K562 (cell line): ENCODE measurements at regions of chr12 and their contacts with region 1.

Region 1: DNA sequence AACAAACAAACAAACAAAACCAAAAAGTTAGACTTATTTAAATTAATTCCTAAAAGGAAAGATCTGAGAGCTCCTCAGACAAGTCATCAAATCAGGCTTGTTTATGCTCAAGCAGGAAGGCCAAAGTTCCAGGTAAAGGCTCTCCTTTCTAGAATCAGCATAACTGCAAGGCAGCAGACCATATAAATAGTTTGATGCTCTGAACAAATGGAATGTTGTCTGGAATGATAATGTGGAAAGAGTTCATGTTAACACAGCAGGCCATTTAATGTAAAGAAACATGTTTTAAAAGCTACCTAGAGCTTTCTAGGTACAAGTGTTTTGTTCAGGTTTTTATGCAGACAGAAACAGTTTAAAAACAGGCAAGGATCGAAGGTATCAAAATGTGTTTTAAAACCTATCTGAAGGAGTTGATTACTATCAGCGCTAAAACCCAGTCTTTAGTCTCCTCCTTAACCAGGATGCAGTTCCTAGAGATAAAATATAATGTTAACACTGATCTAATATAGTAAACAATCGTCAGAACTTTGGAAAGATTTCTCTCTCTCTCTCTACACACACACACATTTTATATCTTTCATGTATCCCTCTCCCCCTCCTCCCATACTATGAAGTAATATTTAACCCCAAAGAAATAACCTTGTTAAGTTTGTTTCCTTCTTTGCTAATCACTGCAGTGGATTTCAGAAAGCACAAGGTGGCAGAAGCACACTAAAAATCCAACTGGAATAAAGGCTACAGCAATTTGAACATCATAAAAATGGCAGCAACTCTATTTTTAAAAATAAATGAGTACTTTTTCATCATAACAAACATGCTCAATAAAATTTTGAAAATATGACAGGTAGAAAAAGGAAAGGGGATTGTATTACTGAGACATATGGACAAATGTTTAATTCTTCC is 135.5 kb downstream of the PAWR start:
- DNase-seq: peak in 1 of 4 experiments; percentile 1
- ATAC-seq: no peak
- H3K4me3 ChIP-seq: no peak overlapping the region
- H3K27ac ChIP-seq: no peak overlapping the region
- H3K4me1 ChIP-seq: no peaks in the 10 kb centered on the region
- H3K27me3 ChIP-seq: no peaks in the 10 kb centered on the region
- CTCF ChIP-seq: peak; percentile 10 to 40 (median 19); a peak in 3 of 6 replicates
- EP300 ChIP-seq: no peak
- POLR2A ChIP-seq: no peak
- RAD21 ChIP-seq: peak; percentile 49 to 56

Region 2: GRCh38 chr12:79487386-79488110 is 67.7 kb before region 1 on chr12:
- CTCF ChIA-PET with region 1: no interaction called
- POLR2A ChIA-PET with region 1: no interaction called
- in situ Hi-C with region 1: no loop called
- intact Hi-C with region 1: no loop called
- DNase-seq: no peak
- ATAC-seq: no peak
- H3K4me3 ChIP-seq: no peak overlapping the region
- H3K27ac ChIP-seq: no peak overlapping the region
- H3K4me1 ChIP-seq: no peaks in the 10 kb centered on the region
- H3K27me3 ChIP-seq: no peaks in the 10 kb centered on the region
- CTCF ChIP-seq: no peak
- EP300 ChIP-seq: no peak
- POLR2A ChIP-seq: no peak
- RAD21 ChIP-seq: no peak

Region 3: DNA sequence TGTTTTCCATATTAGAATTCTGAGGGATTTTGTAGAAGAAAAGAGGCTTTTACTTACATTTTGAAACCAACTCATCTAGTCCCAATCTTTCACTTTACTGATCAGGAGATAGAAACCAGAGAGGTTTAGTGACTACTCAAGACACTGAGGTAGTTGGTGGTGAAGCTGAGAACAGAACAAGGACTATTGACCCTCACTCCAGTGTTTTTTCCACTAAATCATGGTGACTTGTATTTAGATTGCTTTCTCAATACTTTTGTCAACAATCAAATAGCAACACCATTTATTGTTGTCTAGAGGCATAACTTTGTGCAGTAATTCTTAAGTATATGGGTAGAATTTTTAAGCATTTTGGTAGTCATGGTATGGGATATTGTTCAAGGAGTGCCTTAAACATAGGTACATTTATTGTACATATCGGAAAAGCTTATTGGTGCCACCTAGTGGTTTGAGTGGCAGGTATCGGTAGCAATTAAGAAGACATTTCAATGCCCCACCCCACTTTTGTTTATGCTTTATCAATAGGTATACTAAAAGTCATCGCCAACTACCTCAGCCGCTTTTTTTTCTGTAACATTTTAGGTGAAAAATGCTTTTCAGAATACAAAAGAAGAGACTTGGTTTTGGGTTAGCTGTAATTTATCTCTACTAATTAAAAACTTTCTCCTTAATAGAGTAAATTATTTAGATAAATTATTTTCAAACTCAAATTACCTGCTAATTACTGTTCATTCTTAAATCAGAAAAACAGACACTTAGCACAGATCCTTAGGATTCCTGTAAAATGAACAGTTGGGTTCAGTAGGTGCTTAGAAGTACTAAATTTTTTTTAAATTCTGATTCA is 182.8 kb after region 1 on chr12:
- CTCF ChIA-PET with region 1: no interaction called
- POLR2A ChIA-PET with region 1: no interaction called
- in situ Hi-C with region 1: no loop called
- intact Hi-C with region 1: loop called (anchors 10 kb)
- DNase-seq: peak; percentile 44 to 59 (median 50)
- ATAC-seq: peak; percentile 74
- H3K4me3 ChIP-seq: no peak overlapping the region
- H3K27ac ChIP-seq: no peak overlapping the region
- H3K4me1 ChIP-seq: no peaks in the 10 kb centered on the region
- H3K27me3 ChIP-seq: no peaks in the 10 kb centered on the region
- CTCF ChIP-seq: peak in 2 of 3 experiments; percentile 54 to 60; a peak in 4 of 6 replicates
- EP300 ChIP-seq: no peak
- POLR2A ChIP-seq: no peak
- RAD21 ChIP-seq: peak in 1 of 2 experiments; percentile 64; a peak in 2 of 4 replicates

Region 4: DNA sequence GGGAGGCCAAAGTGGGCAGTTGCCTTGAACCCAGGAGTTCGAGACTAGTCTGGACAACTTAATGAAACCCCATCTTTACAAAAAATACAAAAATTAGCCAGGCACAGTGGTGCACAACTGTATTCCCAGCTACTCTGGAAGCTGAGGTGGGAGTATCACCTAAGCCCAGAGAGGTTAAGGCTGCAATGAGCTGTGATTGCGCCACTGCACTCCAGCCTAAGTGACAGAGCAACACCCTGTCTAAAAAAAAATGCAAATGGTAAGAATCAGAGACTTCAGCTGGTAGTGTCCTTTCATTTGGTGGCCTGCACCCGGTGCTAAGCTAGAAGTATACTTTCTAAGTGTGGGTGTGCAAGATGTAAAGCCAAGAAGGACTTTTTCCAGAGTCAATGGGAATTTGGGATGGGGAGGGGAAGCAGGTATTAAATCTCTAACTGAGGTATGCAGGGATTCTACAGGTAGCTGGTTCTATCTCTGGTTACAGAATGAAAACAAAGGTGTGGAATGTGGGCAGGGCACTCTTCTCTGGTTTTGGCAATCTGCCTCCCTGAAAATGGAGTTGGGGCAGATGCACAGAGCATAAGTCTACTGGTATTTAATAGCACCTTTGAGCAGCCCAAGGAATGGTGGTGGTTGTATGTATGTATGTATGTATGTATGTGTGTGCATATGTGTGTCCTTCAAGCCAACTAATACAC is 446.1 kb after region 1 on chr12:
- CTCF ChIA-PET with region 1: no interaction called
- POLR2A ChIA-PET with region 1: no interaction called
- in situ Hi-C with region 1: no loop called
- intact Hi-C with region 1: loop called (anchors 5 kb)
- DNase-seq: no peak
- ATAC-seq: no peak
- H3K4me3 ChIP-seq: no peak overlapping the region
- H3K27ac ChIP-seq: no peak overlapping the region
- H3K4me1 ChIP-seq: no peaks in the 10 kb centered on the region
- H3K27me3 ChIP-seq: no peaks in the 10 kb centered on the region; a peak in 1 of 5 replicates
- CTCF ChIP-seq: no peak
- EP300 ChIP-seq: no peak
- POLR2A ChIP-seq: no peak
- RAD21 ChIP-seq: no peak

Region 5: DNA sequence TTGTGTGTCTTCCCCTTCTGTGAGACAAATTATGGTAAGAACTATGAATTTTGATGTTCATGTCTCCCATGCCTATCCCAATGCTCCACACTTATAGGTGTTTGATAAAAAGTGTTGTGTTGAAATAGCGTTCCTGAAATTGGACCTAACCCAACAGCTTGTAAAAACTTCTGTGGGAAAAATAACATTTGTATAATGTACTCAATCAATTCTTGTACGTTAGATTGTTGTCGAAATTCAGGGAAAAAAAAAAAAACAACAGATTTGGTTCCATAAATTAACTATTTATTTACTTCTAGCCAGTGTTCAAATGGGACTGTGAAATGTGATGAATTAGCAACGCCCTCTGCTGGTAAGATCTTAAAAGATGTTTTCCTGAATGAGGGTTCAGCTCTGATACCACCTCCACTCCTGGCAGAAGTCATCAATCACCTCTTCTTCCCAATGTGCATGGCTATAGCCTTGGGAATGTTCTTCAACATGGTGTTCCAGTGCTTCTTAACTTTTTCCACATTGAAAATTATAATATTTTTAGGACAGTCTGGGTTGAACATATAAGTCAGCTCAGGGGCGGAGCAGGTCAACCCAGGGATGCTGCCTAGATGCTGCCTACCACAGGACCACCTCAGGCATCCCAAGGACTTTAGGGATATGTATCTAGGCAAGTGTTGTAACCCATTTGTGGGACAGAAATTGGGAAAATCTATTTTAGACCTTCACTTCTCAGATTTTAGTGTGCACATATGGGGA is 714.7 kb after region 1 on chr12:
- CTCF ChIA-PET with region 1: interaction called, 4 read pairs
- POLR2A ChIA-PET with region 1: no interaction called
- in situ Hi-C with region 1: no loop called
- intact Hi-C with region 1: loop called (anchors 5 kb)
- DNase-seq: peak; percentile 7 to 41 (median 14)
- ATAC-seq: peak; percentile 70
- H3K4me3 ChIP-seq: no peak overlapping the region
- H3K27ac ChIP-seq: no peak overlapping the region
- H3K4me1 ChIP-seq: no peaks in the 10 kb centered on the region
- H3K27me3 ChIP-seq: no peaks in the 10 kb centered on the region
- CTCF ChIP-seq: peak in 2 of 3 experiments; percentile 35 to 49; a peak in 3 of 6 replicates
- EP300 ChIP-seq: no peak
- POLR2A ChIP-seq: no peak
- RAD21 ChIP-seq: peak; percentile 56 to 69